Aorta (tissue), 5 donors: ENCODE measurements at regions of chr5 and their contacts with region 1.

Region 1: GRCh38 chr5:32916648-32917047 is 205.5 kb downstream of the NPR3 start:
- DNase-seq: no peak
- ATAC-seq: no peak
- H3K4me3 ChIP-seq: no peak overlapping the region
- H3K27ac ChIP-seq: no peak overlapping the region
- H3K4me1 ChIP-seq: no peaks in the 10 kb centered on the region
- H3K27me3 ChIP-seq: no peaks in the 10 kb centered on the region

Region 2: GRCh38 chr5:32668552-32668951 is 248.1 kb before region 1 on chr5:
- intact Hi-C with region 1: no loop called
- DNase-seq: no peak
- ATAC-seq: peak; percentile 50
- H3K4me3 ChIP-seq: no peak overlapping the region
- H3K27ac ChIP-seq: no peak overlapping the region
- H3K4me1 ChIP-seq: no peaks in the 10 kb centered on the region
- H3K27me3 ChIP-seq: no peaks in the 10 kb centered on the region

Region 3: GRCh38 chr5:32703957-32704356 is 212.7 kb before region 1 on chr5:
- intact Hi-C with region 1: loop called in 1 of 2 experiments (anchors 2 kb)
- DNase-seq: no peak
- ATAC-seq: no peak
- H3K4me3 ChIP-seq: no peak overlapping the region
- H3K27ac ChIP-seq: no peak overlapping the region
- H3K4me1 ChIP-seq: no peaks in the 10 kb centered on the region
- H3K27me3 ChIP-seq: no peaks in the 10 kb centered on the region

Region 4: GRCh38 chr5:33059081-33059480 is 142.4 kb after region 1 on chr5:
- intact Hi-C with region 1: no loop called
- DNase-seq: no peak
- ATAC-seq: no peak
- H3K4me3 ChIP-seq: no peak overlapping the region
- H3K27ac ChIP-seq: no peak overlapping the region
- H3K4me1 ChIP-seq: no peaks in the 10 kb centered on the region
- H3K27me3 ChIP-seq: no peaks in the 10 kb centered on the region

Region 5: DNA sequence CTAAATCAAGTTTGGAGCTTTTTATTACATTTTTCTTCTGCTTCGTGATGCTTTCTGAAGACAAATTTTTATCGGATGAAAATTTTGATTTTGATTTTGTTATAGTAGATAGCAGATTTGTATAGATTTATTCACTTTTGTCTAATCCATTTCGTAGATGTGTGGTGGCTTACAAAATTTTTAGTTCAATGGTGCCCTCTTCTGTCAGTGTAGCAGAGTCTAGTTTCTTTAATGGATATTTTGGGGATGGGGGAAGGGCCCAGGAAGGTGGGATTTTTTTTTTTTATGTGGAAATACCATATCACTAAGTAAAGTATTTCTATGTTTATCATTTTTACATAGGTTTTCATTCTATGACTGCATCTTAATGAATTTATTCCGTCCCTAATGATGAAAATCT is 264.3 kb after region 1 on chr5:
- intact Hi-C with region 1: loop called in 1 of 2 experiments (anchors 10 kb)
- DNase-seq: no peak
- ATAC-seq: no peak
- H3K4me3 ChIP-seq: no peak overlapping the region
- H3K27ac ChIP-seq: no peak overlapping the region
- H3K4me1 ChIP-seq: no peaks in the 10 kb centered on the region
- H3K27me3 ChIP-seq: no peaks in the 10 kb centered on the region

Region 6: GRCh38 chr5:33423018-33423630 is 506.5 kb after region 1 on chr5:
- intact Hi-C with region 1: loop called in 1 of 2 experiments (anchors 10 kb)
- DNase-seq: no peak
- ATAC-seq: peak; percentile 60
- H3K4me3 ChIP-seq: no peak overlapping the region
- H3K27ac ChIP-seq: no peak overlapping the region
- H3K4me1 ChIP-seq: no peaks in the 10 kb centered on the region
- H3K27me3 ChIP-seq: no peaks in the 10 kb centered on the region